ENCODE measurements at regions of chr6 and their contacts with region 1.

Region 1: GRCh38 chr6:24581084-24581669 is 64.8 kb downstream of the KIAA0319 start:
- DNase-seq: peak; percentile 38
- H3K4me3 ChIP-seq: no peak overlapping the region
- H3K27ac ChIP-seq: no peak overlapping the region
- H3K4me1 ChIP-seq: no peaks in the 10 kb centered on the region
- H3K27me3 ChIP-seq: no peaks in the 10 kb centered on the region
- CTCF ChIP-seq: peak; percentile 84 to 93

Region 2: DNA sequence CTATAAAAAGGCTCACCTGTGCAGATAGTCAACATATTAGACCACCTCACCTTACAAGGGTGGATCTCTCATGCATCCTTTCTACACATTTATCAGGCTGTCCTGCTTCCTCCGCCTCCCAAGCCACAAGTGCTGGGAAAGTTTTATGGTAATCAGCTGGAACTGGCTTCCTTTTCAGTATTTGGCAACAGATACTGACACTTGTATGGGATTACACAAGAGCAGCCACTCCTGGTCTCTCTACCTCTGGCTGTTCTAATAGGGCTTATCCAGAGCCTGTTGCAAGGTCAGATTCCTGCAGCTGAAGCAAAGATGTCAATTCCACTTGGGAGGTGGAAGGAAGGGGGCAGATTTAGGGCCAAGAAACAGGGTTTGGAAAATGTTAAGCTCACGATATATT is 91.3 kb before region 1 on chr6:
- CTCF ChIA-PET with region 1: no interaction called
- dilution Hi-C with region 1: no loop called
- in situ Hi-C with region 1: no loop called
- intact Hi-C with region 1: no loop called
- DNase-seq: peak; percentile 36
- H3K4me3 ChIP-seq: no peak overlapping the region
- H3K27ac ChIP-seq: no peak overlapping the region
- H3K4me1 ChIP-seq: peaks cover 6% of the 10 kb centered on the region
- H3K27me3 ChIP-seq: peaks cover 3% of the 10 kb centered on the region
- CTCF ChIP-seq: no peak

Region 3: DNA sequence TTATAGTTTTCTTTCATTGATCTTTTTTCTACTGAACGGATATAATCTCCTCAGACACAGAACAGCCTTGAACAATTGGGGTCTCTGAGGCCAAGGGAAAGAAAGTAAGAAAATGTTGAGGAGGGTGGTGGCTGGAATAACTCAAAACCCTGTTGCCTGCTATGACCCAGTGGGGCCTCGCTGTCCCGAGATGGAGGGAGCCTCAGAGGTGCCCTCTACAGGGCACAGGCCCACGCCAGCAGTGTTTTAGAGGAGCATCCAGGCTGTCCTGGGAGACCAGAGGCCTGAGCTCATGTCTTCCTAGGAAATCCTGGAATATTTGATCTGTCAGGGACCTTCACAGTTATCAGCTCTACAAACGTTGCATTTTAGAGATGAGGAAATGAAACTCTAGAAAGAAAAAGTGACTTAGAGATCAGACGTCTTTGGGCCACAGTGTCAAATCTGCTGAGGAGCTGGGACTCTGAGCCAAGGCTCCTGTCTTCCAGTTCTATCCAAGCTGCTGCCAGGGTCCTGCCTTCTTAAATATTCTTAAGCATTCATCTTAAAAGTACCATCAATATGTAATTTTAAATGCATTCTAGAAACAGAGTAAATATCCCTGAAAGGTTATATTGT is 60.1 kb before region 1 on chr6:
- CTCF ChIA-PET with region 1: interaction called, 10 read pairs
- dilution Hi-C with region 1: no loop called
- in situ Hi-C with region 1: no loop called
- intact Hi-C with region 1: no loop called
- DNase-seq: peak; percentile 8
- H3K4me3 ChIP-seq: no peak overlapping the region
- H3K27ac ChIP-seq: no peak overlapping the region
- H3K4me1 ChIP-seq: no peaks in the 10 kb centered on the region
- H3K27me3 ChIP-seq: no peaks in the 10 kb centered on the region
- CTCF ChIP-seq: peak; percentile 68 to 87

Region 4: GRCh38 chr6:24699521-24700359 is 118.6 kb after region 1 on chr6:
- CTCF ChIA-PET with region 1: no interaction called
- dilution Hi-C with region 1: no loop called
- in situ Hi-C with region 1: loop called (anchors 5 kb)
- intact Hi-C with region 1: loop called (anchors 1 kb)
- DNase-seq: no peak
- H3K4me3 ChIP-seq: no peak overlapping the region
- H3K27ac ChIP-seq: no peak overlapping the region
- H3K4me1 ChIP-seq: no peaks in the 10 kb centered on the region
- H3K27me3 ChIP-seq: no peaks in the 10 kb centered on the region
- CTCF ChIP-seq: no peak

Region 5: GRCh38 chr6:24774696-24775519 is 193.7 kb after region 1 on chr6 and contains the start of gene GMNN:
- CTCF ChIA-PET with region 1: interaction called, 4 read pairs
- dilution Hi-C with region 1: no loop called
- in situ Hi-C with region 1: loop called (anchors 5 to 25 kb)
- intact Hi-C with region 1: no loop called
- DNase-seq: peak; percentile 93
- H3K4me3 ChIP-seq: peak within 1 kb of the TSS; percentile 74 to 100 (median 100)
- H3K27ac ChIP-seq: peak within 1 kb of the TSS; percentile 93
- H3K4me1 ChIP-seq: peaks cover 5% of the 10 kb centered on the region
- H3K27me3 ChIP-seq: no peaks in the 10 kb centered on the region
- CTCF ChIP-seq: no peak
- total RNA-seq, gene GMNN: 8.0 to 36.3 TPM

Region 6: DNA sequence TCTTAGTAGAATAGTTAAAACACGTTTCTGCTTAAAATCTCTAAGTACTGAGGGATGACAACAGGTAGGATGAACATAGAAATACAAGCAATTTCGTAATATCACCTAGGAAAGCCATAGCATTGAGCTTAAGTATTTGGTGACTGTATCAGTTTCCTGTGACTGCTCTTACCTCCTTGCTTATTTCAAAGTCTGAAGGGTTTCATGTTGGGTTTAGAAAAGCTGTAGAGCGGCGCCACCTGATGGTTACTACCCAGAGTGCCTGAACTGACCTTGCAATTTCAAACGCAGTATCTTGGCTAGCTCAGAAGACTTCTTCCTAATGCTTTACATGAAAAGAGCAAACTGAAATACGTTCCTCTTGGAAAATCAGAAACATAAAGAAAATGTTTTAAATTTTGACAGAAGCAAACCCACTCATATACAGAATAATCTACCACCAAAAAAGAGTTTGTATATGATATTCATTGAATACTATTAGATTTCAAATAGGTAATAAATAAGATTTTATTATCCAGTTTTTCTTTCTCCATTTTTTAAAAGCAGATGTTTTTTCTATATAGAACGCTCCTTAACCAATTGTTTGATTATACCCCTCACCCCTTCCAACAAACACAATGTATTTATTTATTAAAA is 436.9 kb after region 1 on chr6:
- CTCF ChIA-PET with region 1: no interaction called
- dilution Hi-C with region 1: no loop called
- in situ Hi-C with region 1: no loop called
- intact Hi-C with region 1: loop called (anchors 5 kb)
- DNase-seq: peak; percentile 78
- H3K4me3 ChIP-seq: peak overlapping the region in 1 of 3 experiments; percentile 2
- H3K27ac ChIP-seq: peak overlapping the region; percentile 72
- H3K4me1 ChIP-seq: peaks cover 44% of the 10 kb centered on the region
- H3K27me3 ChIP-seq: no peaks in the 10 kb centered on the region
- CTCF ChIP-seq: peak; percentile 90